Natural killer cell (primary cell): ENCODE measurements at regions of chr19 and their contacts with region 1.

Region 1: GRCh38 chr19:55599468-55600279 is at the start of gene FIZ1:
- DNase-seq: peak; percentile 93 to 98
- ATAC-seq: peak; percentile 69 to 85 (median 73)
- H3K4me3 ChIP-seq: peak within 1 kb of the TSS; percentile 94
- H3K4me3 Mint-ChIP-seq: peak within 1 kb of the TSS; percentile 96
- H3K27ac ChIP-seq: peak within 1 kb of the TSS; percentile 100
- H3K27ac Mint-ChIP-seq: peak within 1 kb of the TSS; percentile 96 to 99
- H3K4me1 ChIP-seq: peaks cover 27% of the 10 kb centered on the region
- H3K4me1 Mint-ChIP-seq: peaks cover 25 to 40% of the 10 kb centered on the region in 2 donors
- H3K27me3 ChIP-seq: no peaks in the 10 kb centered on the region
- H3K27me3 Mint-ChIP-seq: no peaks in the 10 kb centered on the region
- CTCF ChIP-seq: no peak
- total RNA-seq, gene FIZ1: 8.5 to 18.2 (median 10.3) TPM

Region 2: DNA sequence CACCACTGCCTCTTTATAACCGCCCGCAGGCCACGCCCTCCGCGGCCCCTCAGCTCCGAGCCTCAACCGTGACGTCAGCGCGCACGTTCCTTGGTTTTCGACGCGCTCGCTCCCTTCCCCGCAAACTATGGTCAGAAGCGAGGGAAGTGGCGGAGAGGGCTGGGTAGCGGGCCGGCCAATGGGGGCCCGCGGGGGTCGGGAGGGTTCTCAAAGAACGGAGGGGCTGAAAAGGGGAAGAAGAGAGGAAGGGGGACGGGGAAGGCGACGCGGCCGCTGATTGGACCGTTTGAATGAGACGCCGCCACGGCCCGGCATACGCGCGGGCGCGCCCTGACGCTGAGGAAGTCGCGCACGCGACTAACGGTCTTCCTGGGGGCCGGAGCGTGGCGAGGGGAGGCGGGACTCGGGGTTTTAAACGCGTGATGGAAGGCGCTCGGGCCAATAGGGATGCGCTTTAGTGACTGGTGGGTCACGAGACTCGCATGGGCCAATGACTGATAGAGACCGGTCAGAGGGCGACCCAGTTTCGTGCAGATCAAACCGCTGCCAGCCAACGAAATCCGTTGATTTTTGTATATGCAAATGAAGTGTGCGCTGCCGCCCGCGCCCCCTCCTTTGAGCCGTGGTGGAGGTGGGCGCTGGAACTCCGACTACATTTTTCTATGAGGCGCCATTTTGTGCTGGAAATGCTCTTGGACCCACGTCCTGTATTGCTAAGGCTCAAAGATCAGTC is 191.7 kb before region 1 on chr19:
- intact Hi-C with region 1: no loop called
- DNase-seq: peak; percentile 96 to 99
- ATAC-seq: peak; percentile 85 to 93 (median 88)
- H3K4me3 ChIP-seq: peak overlapping the region; percentile 57
- H3K4me3 Mint-ChIP-seq: peak overlapping the region; percentile 98
- H3K27ac ChIP-seq: peak overlapping the region; percentile 99
- H3K27ac Mint-ChIP-seq: peak overlapping the region; percentile 99 to 100
- H3K4me1 ChIP-seq: peaks cover 24% of the 10 kb centered on the region
- H3K4me1 Mint-ChIP-seq: peaks cover 29 to 33% of the 10 kb centered on the region in 2 donors
- H3K27me3 ChIP-seq: no peaks in the 10 kb centered on the region
- H3K27me3 Mint-ChIP-seq: no peaks in the 10 kb centered on the region
- CTCF ChIP-seq: no peak

Region 3: GRCh38 chr19:55476100-55476775 is 123.4 kb before region 1 on chr19 and contains the start of gene ZNF628:
- intact Hi-C with region 1: loop called (anchors 1 kb)
- DNase-seq: peak; percentile 97 to 99
- ATAC-seq: peak; percentile 91 to 96 (median 92)
- H3K4me3 ChIP-seq: peak within 1 kb of the TSS; percentile 49
- H3K4me3 Mint-ChIP-seq: peak within 1 kb of the TSS; percentile 89
- H3K27ac ChIP-seq: peak within 1 kb of the TSS; percentile 74
- H3K27ac Mint-ChIP-seq: peak within 1 kb of the TSS; percentile 86 to 90
- H3K4me1 ChIP-seq: peaks cover 20% of the 10 kb centered on the region
- H3K4me1 Mint-ChIP-seq: peaks cover 31 to 37% of the 10 kb centered on the region in 2 donors
- H3K27me3 ChIP-seq: no peaks in the 10 kb centered on the region
- H3K27me3 Mint-ChIP-seq: no peaks in the 10 kb centered on the region
- CTCF ChIP-seq: no peak
- total RNA-seq, gene ZNF628: 20.8 to 28.7 (median 24.1) TPM

Region 4: DNA sequence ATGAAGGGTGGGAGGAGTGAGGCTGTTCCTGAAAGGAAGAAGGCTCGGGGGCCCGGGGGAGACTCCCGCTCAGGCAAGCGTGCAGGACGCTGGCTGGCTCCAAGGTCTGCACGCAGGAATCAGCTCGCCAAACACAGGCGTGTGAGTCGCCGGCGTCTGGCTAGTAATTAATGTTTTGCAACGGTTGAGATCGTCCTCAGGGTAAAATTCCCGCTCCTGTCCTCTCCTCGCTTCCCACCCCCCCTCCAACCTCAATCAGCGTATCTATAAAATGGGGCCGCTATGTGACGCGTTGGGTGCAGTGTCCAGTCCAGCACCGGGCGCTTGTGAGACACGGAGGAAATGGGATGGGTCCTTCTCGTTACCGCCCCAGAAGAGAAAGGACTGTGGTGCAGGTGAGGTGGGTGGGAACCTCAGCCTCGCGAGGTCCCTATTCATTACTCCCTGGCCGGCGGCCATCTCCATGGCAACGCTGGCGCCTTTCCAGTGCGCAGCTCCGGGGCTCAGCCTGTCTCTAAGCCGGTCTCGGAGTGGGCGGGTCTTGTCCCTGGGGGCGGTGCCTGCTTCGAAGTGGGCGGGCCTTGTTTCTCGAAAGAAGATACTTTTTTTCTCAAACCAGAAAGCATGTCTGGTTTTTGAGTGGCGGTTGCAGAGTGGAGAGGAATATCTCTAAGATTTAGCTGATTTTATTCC is 12.6 kb before region 1 on chr19:
- intact Hi-C with region 1: loop called (anchors 1 kb)
- DNase-seq: peak; percentile 90 to 95
- ATAC-seq: peak; percentile 97 to 99 (median 99)
- H3K4me3 ChIP-seq: peak overlapping the region; percentile 22
- H3K4me3 Mint-ChIP-seq: peak overlapping the region; percentile 82
- H3K27ac ChIP-seq: peak overlapping the region; percentile 32
- H3K27ac Mint-ChIP-seq: peak overlapping the region in 1 of 2 donors; percentile 60
- H3K4me1 ChIP-seq: peaks cover 26% of the 10 kb centered on the region
- H3K4me1 Mint-ChIP-seq: peaks cover 11 to 25% of the 10 kb centered on the region in 2 donors
- H3K27me3 ChIP-seq: no peaks in the 10 kb centered on the region
- H3K27me3 Mint-ChIP-seq: peaks cover 15 to 33% of the 10 kb centered on the region in 2 donors
- CTCF ChIP-seq: no peak

Region 5: DNA sequence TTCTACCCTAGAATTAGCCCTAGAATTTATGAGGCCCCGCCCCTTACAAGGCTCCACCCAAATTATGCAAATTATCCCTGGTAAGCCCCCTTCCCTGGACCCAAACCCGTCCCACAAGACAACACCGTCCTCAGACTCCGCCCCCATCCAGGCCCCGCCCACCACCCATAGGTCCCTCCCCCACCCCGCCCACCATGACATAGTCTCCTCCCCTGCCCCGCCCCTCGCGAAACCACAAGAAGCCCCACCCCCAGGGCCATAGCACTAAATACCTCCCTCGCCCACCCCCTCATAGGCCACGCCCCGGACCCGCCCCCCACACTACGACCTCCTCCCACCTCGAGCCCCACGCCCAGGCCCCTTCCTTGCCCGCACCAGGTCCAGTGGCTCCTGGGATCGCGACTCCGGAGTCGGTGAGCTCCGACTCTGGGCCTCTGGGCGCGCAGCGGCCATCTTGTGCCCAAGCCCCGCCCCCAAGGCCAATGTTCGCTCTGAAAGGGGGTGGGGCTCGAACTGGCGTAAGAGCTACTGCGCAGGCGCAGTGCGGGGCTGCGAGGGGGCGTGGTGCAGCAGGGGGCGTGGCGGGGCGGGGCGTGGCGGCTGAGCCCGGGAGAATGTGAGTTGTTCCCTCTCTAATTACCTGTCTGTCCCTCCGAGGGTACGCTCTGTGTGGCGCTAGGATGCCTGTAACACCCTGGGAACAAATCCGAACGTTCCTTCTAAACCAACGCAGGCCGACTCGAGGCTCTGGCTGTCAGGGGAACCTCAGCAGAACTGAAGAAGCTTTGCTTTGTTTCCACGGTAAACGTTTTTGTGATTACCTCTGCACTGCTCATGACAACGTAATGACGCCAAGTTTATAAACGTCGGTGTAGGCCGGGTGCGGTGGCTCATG is 24.7 kb after region 1 on chr19 and contains the start of gene ZNF784:
- intact Hi-C with region 1: loop called (anchors 1 kb)
- DNase-seq: peak; percentile 95 to 98
- ATAC-seq: peak; percentile 87 to 95 (median 89)
- H3K4me3 ChIP-seq: peak within 1 kb of the TSS; percentile 64
- H3K4me3 Mint-ChIP-seq: peak within 1 kb of the TSS; percentile 87
- H3K27ac ChIP-seq: peak within 1 kb of the TSS; percentile 97
- H3K27ac Mint-ChIP-seq: peak within 1 kb of the TSS; percentile 88 to 98
- H3K4me1 ChIP-seq: peaks cover 19% of the 10 kb centered on the region
- H3K4me1 Mint-ChIP-seq: peaks cover 14 to 27% of the 10 kb centered on the region in 2 donors
- H3K27me3 ChIP-seq: no peaks in the 10 kb centered on the region
- H3K27me3 Mint-ChIP-seq: no peaks in the 10 kb centered on the region
- CTCF ChIP-seq: no peak
- total RNA-seq, gene ZNF784: 6.4 to 7.9 (median 7.1) TPM